ENCODE measurements at regions of chr11 and their contacts with region 1.

Region 1: GRCh38 chr11:9314291-9315036 is at the start of gene TMEM41B:
- DNase-seq: peak; percentile 91 to 99 (median 96)
- H3K4me3 ChIP-seq: peak within 1 kb of the TSS; percentile 67 to 100 (median 95)
- H3K27ac ChIP-seq: peak within 1 kb of the TSS; percentile 44 to 97 (median 90)
- H3K27me3 ChIP-seq: peaks cover 0 to 11% (median 0%) of the 10 kb centered on the region in 45 donors
- CTCF ChIP-seq: peak in 51 of 56 donors; percentile 1 to 67 (median 41)
- total RNA-seq, gene TMEM41B: 31.7 to 63.9 (median 42.1) TPM

Region 2: GRCh38 chr11:9144830-9145229 is 169.6 kb before region 1 on chr11:
- intact Hi-C with region 1: loop called in 1 of 2 experiments (anchors 5 kb)
- DNase-seq: peak in 1 of 10 donors; percentile 71
- H3K4me3 ChIP-seq: no peak overlapping the region
- H3K27ac ChIP-seq: peak overlapping the region in 45 of 59 donors; percentile 0 to 93 (median 77)
- H3K27me3 ChIP-seq: no peaks in the 10 kb centered on the region
- CTCF ChIP-seq: no peak

Region 3: DNA sequence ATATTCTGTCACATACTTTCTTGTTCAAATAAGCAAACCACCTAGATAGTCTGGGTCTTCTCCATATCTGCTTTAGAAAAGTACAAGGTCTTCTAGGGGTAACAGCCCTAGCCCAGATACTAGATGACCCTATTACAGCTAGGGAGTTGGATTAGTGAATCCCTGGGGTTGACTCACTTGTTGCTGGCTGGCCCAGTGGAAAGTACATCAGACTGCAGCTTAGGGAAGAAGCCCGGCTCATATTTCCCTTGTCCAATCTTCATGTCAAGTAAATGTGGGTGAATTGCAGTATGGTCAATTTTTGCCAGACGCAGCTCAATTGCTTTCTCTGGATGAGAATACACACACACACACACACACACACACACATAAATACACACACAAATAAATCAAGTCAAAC is 144.0 kb before region 1 on chr11:
- intact Hi-C with region 1: loop called in 1 of 2 experiments (anchors 10 kb)
- DNase-seq: no peak
- H3K4me3 ChIP-seq: no peak overlapping the region
- H3K27ac ChIP-seq: peak overlapping the region in 15 of 59 donors; percentile 7 to 55 (median 36)
- H3K27me3 ChIP-seq: no peaks in the 10 kb centered on the region
- CTCF ChIP-seq: no peak

Region 4: GRCh38 chr11:9363954-9364912 is 49.8 kb after region 1 on chr11:
- intact Hi-C with region 1: loop called (anchors 2 to 5 kb)
- DNase-seq: peak; percentile 77 to 97 (median 91)
- H3K4me3 ChIP-seq: peak overlapping the region; percentile 49 to 84 (median 70)
- H3K27ac ChIP-seq: peak overlapping the region; percentile 87 to 100 (median 98)
- H3K27me3 ChIP-seq: no peaks in the 10 kb centered on the region
- CTCF ChIP-seq: peak in 24 of 56 donors; percentile 5 to 51 (median 26)

Measured in dorsolateral prefrontal cortex (tissue), 120 donors.